ENCODE measurements at regions of chr2 and their contacts with region 1.

Region 1: GRCh38 chr2:166127217-166128155 is at the start of gene SCN1A:
- DNase-seq: peak; percentile 2 to 43
- ATAC-seq: peak in 1 of 2 experiments; percentile 76; a peak in 4 of 6 replicates
- H3K4me3 ChIP-seq: no peak within 1 kb of the TSS
- H3K27ac ChIP-seq: no peak within 1 kb of the TSS
- H3K4me1 ChIP-seq: no peaks in the 10 kb centered on the region
- CTCF ChIP-seq: peak; percentile 81
- EP300 ChIP-seq: no peak
- POLR2A ChIP-seq: no peak
- RAD21 ChIP-seq: peak; percentile 62 to 74; a peak in 4 of 5 replicates
- polyA plus RNA-seq, gene SCN1A: not detected in 2 replicates

Region 2: DNA sequence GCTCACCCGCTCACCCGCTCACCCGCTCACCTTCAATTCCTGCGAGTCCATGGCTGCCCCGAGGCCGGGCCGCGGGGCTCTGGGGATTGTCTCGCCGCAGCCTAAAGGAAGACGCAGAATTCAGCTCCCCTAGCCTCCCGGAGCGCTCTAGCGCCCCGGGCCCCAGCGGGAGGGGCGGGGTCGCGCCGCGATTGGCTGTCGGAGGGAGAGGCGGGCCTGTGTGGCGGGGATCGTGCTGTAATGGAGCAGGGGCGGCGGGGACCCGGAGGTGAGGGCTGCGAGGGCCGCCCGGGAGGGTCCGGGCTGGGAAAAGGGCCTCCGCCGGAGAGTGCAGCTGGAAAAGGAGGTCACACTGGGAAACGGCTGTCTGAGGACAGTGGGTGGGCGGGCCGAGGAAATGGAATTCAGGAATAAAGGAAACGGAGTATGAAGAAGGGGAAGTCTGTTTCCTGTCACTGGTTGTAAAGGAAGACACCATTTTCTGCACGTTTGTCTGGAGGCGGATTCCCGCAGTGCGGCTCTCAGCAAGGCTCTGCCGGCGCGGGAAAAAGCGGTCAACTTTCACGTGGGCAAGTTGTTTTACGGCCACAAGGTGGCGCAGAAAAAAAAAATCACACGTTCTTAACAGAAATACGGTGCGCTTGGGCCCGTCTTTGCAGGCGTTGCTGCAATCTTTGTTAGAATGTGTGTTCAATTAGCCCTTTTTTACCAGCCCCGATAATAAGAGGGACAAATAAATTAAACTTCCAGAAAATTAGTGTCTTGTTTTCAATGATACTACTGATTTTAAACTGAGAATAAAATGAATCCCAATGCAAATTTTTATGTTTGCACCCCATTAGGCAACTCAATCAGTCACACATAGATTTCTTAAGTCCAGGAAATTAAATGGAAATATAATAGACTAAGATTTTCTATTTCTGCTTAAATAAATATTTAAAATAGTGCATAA is 173.6 kb before region 1 on chr2 and contains the start of gene TTC21B:
- CTCF ChIA-PET with region 1: interaction called, 32 read pairs
- POLR2A ChIA-PET with region 1: interaction called, 3 read pairs
- DNase-seq: peak; percentile 74 to 95
- ATAC-seq: peak; percentile 98
- H3K4me3 ChIP-seq: peak within 1 kb of the TSS; percentile 63
- H3K27ac ChIP-seq: peak within 1 kb of the TSS; percentile 79 to 94
- H3K4me1 ChIP-seq: peaks cover 17% of the 10 kb centered on the region; the same call in 2 of the 3 replicates
- CTCF ChIP-seq: peak; percentile 78
- EP300 ChIP-seq: no peak
- POLR2A ChIP-seq: peak; percentile 52
- RAD21 ChIP-seq: peak; percentile 41 to 64
- polyA plus RNA-seq, gene TTC21B: 17.5 and 23.3 TPM in 2 replicates

Region 3: DNA sequence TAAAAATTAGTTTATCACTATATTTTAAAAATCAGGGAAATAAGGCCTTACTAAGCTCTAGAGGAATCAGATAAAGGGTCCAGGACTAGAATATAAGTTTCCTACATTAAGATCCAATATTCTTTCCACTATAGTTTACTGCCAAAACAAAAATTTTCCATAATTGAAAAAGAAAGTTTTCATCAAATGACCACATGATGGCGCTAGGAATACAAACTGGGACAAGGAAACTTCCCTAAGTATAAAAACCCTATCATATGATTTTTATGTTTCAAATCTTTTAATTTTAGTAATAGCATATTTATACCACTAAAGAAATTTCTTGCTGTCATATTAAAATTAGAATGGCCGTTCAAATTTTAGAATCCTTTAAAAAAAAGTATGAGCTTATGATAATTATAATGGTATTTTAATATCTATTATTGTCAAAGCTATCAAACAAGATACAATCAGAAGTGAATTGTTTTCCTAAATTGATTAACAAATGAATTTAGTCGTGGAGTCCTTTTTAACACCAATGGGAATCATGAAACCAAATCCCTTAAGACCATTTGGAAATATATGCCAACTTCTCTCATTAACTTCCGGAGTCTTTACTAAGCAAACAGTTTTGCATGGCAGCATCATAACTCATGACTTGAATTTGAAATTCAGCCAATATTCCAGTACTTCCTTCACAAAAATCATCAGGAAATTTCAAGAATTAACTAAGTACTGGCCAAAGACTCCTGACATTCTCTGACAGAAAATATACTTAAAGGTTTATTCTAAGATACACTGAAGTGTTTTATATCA is 69.9 kb before region 1 on chr2:
- CTCF ChIA-PET with region 1: interaction called, 12 read pairs
- POLR2A ChIA-PET with region 1: no interaction called
- DNase-seq: peak in 1 of 2 experiments; percentile 18
- ATAC-seq: no peak
- H3K4me3 ChIP-seq: no peak overlapping the region
- H3K27ac ChIP-seq: no peak overlapping the region
- H3K4me1 ChIP-seq: peaks cover 6% of the 10 kb centered on the region; the same call in 1 of the 3 replicates
- CTCF ChIP-seq: peak; percentile 54
- EP300 ChIP-seq: no peak
- POLR2A ChIP-seq: no peak
- RAD21 ChIP-seq: peak; percentile 43 to 48; a peak in 4 of 5 replicates

Region 4: GRCh38 chr2:166112193-166112605 is 15.3 kb before region 1 on chr2:
- CTCF ChIA-PET with region 1: interaction called, 11 read pairs
- POLR2A ChIA-PET with region 1: no interaction called
- DNase-seq: no peak
- ATAC-seq: no peak
- H3K4me3 ChIP-seq: no peak overlapping the region
- H3K27ac ChIP-seq: no peak overlapping the region
- H3K4me1 ChIP-seq: no peaks in the 10 kb centered on the region
- CTCF ChIP-seq: no peak
- EP300 ChIP-seq: no peak
- POLR2A ChIP-seq: no peak
- RAD21 ChIP-seq: no peak

Region 5: GRCh38 chr2:166158546-166158945 is 31.1 kb after region 1 on chr2:
- CTCF ChIA-PET with region 1: no interaction called
- POLR2A ChIA-PET with region 1: no interaction called
- DNase-seq: no peak
- ATAC-seq: no peak
- H3K4me3 ChIP-seq: no peak overlapping the region
- H3K27ac ChIP-seq: no peak overlapping the region
- H3K4me1 ChIP-seq: no peaks in the 10 kb centered on the region
- CTCF ChIP-seq: no peak
- EP300 ChIP-seq: no peak
- POLR2A ChIP-seq: no peak
- RAD21 ChIP-seq: no peak

Region 6: GRCh38 chr2:166917415-166917814 is 789.9 kb after region 1 on chr2:
- CTCF ChIA-PET with region 1: no interaction called
- POLR2A ChIA-PET with region 1: no interaction called
- DNase-seq: no peak
- ATAC-seq: no peak
- H3K4me3 ChIP-seq: no peak overlapping the region
- H3K27ac ChIP-seq: no peak overlapping the region
- H3K4me1 ChIP-seq: no peaks in the 10 kb centered on the region
- CTCF ChIP-seq: no peak
- EP300 ChIP-seq: no peak
- POLR2A ChIP-seq: no peak
- RAD21 ChIP-seq: no peak